CD4-positive, alpha-beta memory T cell (primary cell): ENCODE measurements at regions of chr5 and their contacts with region 1.

Region 1: GRCh38 chr5:135332519-135333150 is 66.4 kb downstream of the MACROH2A1 start:
- DNase-seq: peak in 3 of 5 donors; percentile 13 to 20 (median 20)
- H3K4me3 ChIP-seq: no peak overlapping the region
- H3K4me3 Mint-ChIP-seq: no peak overlapping the region
- H3K27ac ChIP-seq: no peak overlapping the region
- H3K27ac Mint-ChIP-seq: no peak overlapping the region
- H3K4me1 ChIP-seq: no peaks in the 10 kb centered on the region
- H3K4me1 Mint-ChIP-seq: peaks cover 0 to 2% (median 0%) of the 10 kb centered on the region in 4 donors
- H3K27me3 ChIP-seq: no peaks in the 10 kb centered on the region
- H3K27me3 Mint-ChIP-seq: no peaks in the 10 kb centered on the region

Region 2: GRCh38 chr5:134917070-134917815 is 415.4 kb before region 1 on chr5:
- CTCF ChIA-PET with region 1: no interaction called
- POLR2A ChIA-PET with region 1: no interaction called
- intact Hi-C with region 1: loop called (anchors 5 kb)
- DNase-seq: no peak
- H3K4me3 ChIP-seq: no peak overlapping the region
- H3K4me3 Mint-ChIP-seq: no peak overlapping the region
- H3K27ac ChIP-seq: no peak overlapping the region
- H3K27ac Mint-ChIP-seq: peak overlapping the region in 3 of 7 donors; percentile 5 to 15 (median 13)
- H3K4me1 ChIP-seq: peaks cover 7% of the 10 kb centered on the region
- H3K4me1 Mint-ChIP-seq: peaks cover 10 to 13% (median 12%) of the 10 kb centered on the region in 4 donors
- H3K27me3 ChIP-seq: no peaks in the 10 kb centered on the region
- H3K27me3 Mint-ChIP-seq: no peaks in the 10 kb centered on the region

Region 3: GRCh38 chr5:135191084-135191826 is 141.4 kb before region 1 on chr5:
- CTCF ChIA-PET with region 1: interaction called, 8 read pairs
- POLR2A ChIA-PET with region 1: no interaction called
- intact Hi-C with region 1: loop called (anchors 1 kb)
- DNase-seq: peak; percentile 45 to 59 (median 55)
- H3K4me3 ChIP-seq: peak overlapping the region in 1 of 2 donors; percentile 38
- H3K4me3 Mint-ChIP-seq: peak overlapping the region; percentile 48 to 84 (median 76)
- H3K27ac ChIP-seq: no peak overlapping the region
- H3K27ac Mint-ChIP-seq: no peak overlapping the region
- H3K4me1 ChIP-seq: no peaks in the 10 kb centered on the region
- H3K4me1 Mint-ChIP-seq: peaks cover 0 to 4% (median 0%) of the 10 kb centered on the region in 4 donors
- H3K27me3 ChIP-seq: no peaks in the 10 kb centered on the region
- H3K27me3 Mint-ChIP-seq: peaks cover 11 to 27% of the 10 kb centered on the region in 2 donors